Endothelial cell of umbilical vein (primary cell): ENCODE measurements at regions of chr6 and their contacts with region 1.

Region 1: DNA sequence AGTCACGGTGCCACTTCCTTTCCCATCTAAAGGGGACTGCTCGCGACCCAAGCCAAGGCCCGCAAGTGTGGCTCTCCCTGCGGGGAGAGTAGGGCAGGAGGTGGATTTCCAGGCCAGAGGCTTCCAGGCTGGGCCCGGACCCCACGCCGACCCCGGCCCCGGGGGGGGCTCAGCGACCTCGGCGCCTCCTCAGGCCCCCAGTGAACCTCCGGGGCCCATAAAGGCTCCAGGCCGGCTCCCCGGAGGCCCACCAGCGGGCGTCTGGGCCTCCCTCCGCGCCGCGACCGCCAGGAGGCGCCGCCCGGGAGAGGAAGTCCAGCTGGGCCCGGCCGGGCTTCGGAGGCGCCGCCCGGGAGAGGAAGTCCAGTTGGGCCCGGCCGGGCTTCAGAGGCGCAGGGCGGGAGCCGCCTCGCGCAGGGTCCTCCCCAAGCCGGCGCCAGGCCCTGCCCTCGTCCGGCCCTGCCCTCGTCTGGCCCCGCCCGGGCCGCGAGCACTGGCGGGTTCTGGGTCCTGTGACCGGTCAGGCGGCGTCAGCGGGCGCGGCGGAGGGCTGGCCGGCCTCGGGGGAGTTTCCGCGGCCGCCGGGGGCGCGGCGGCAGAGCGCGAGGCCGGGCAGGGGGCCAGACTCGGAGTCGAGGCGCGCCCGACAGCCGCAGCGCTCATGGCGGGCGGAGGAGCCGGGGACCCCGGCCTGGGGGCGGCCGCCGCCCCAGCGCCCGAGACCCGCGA is at the start of gene RAB32:
- DNase-seq: peak; percentile 92
- H3K4me3 ChIP-seq: peak within 1 kb of the TSS; percentile 78 to 95 (median 87)
- H3K27ac ChIP-seq: peak within 1 kb of the TSS; percentile 58
- H3K4me1 ChIP-seq: peaks cover 29% of the 10 kb centered on the region
- H3K27me3 ChIP-seq: no peaks in the 10 kb centered on the region
- CTCF ChIP-seq: peak; percentile 62 to 69
- POLR2A ChIP-seq: peak; percentile 69
- total RNA-seq, gene RAB32: 65.6 and 78.3 TPM in 2 replicates

Region 2: DNA sequence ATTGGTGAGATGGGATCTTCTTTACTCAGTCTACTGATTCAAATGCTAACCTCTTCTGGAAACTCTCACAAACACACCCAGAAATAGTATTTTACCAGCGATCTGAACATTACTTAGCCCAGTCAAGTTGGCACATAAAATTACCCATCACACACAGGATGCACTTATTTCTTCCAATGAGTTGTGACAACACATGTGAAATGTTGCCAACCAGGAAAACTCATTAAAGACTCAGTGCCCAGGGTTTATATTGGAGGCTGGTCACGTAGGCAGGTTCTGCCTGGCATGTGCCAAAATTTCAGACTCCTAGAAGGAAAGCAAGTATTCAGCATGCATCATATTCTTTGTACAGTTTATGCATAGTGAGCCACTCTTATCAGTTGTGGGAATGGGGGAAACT is 1251.3 kb before region 1 on chr6:
- CTCF ChIA-PET with region 1: no interaction called
- POLR2A ChIA-PET with region 1: no interaction called
- dilution Hi-C with region 1: no loop called
- intact Hi-C with region 1: no loop called
- DNase-seq: no peak
- H3K4me3 ChIP-seq: no peak overlapping the region
- H3K27ac ChIP-seq: no peak overlapping the region
- H3K4me1 ChIP-seq: no peaks in the 10 kb centered on the region
- H3K27me3 ChIP-seq: no peaks in the 10 kb centered on the region
- CTCF ChIP-seq: no peak
- POLR2A ChIP-seq: no peak

Region 3: DNA sequence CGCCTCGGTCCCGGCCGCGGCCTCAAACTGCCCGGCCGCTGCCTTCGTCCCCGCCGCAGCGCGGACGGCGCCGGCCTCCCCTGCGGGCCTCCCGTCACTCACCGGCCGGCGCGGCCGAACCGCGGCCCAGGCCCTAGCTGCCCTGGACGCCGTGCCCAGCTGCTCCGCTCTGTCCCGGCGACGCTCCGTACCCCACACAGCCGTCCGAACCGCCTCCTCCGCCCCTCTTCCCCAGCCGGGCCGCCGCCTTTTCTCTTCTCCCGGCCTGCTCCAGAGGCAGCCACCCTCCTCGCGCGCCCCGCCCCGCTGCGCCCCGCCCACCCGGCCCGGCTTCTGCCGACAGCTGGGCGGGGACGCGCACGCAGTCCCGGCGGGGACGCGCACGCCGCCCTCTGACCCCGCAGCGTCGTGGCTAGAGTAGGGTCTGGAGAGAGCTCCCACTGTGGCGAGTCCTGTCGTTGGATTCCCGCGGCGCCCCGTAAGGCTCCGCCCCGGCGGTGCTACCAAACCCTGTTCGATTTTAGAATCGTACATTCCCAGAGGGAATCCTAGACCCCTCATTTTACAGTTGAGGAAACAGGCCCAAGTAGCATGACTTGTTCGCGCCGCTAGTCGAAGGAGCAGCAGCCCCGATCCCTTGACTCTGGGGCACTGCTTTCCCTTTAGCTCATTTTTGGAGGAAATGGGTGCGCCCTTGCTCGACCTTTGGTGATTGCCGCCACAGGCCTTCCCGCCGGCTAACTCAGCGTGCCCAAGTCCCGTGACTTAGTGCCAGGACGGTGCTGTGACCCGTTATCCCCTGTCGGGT is 728.7 kb before region 1 on chr6 and contains the start of gene FBXO30:
- CTCF ChIA-PET with region 1: no interaction called
- POLR2A ChIA-PET with region 1: no interaction called
- dilution Hi-C with region 1: no loop called
- intact Hi-C with region 1: loop called (anchors 2 kb)
- DNase-seq: peak; percentile 95
- H3K4me3 ChIP-seq: peak within 1 kb of the TSS; percentile 56 to 95 (median 90)
- H3K27ac ChIP-seq: peak within 1 kb of the TSS; percentile 83
- H3K4me1 ChIP-seq: peaks cover 28% of the 10 kb centered on the region
- H3K27me3 ChIP-seq: no peaks in the 10 kb centered on the region
- CTCF ChIP-seq: no peak
- POLR2A ChIP-seq: peak; percentile 71
- total RNA-seq, gene FBXO30: 10.4 and 11.1 TPM in 2 replicates

Region 4: GRCh38 chr6:145963216-145964068 is 579.9 kb before region 1 on chr6:
- CTCF ChIA-PET with region 1: interaction called, 5 read pairs
- POLR2A ChIA-PET with region 1: no interaction called
- dilution Hi-C with region 1: no loop called
- intact Hi-C with region 1: loop called (anchors 1 kb)
- DNase-seq: peak; percentile 68
- H3K4me3 ChIP-seq: peak overlapping the region; percentile 73 to 78 (median 77)
- H3K27ac ChIP-seq: peak overlapping the region; percentile 66
- H3K4me1 ChIP-seq: peaks cover 11% of the 10 kb centered on the region
- H3K27me3 ChIP-seq: no peaks in the 10 kb centered on the region
- CTCF ChIP-seq: no peak
- POLR2A ChIP-seq: no peak

Region 5: DNA sequence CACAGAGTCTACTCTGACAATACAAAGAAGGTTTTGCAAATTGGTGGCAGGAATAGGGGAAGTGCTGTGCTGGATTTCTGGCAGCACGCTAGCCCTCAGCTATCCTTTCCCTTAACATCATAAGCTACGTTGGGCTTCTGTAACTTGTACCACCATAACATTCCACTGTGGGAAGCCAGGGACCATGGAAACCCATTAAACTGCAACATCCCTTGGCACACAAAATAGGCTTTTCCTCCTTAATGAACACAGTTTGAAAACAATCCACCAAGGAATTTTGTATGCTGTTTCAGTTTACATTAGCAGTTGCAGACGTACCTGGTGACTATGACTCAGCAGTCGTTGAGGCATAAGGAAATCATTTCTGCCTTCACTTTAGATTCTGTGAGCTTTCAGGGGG is 203.7 kb before region 1 on chr6:
- CTCF ChIA-PET with region 1: interaction called, 4 read pairs
- POLR2A ChIA-PET with region 1: no interaction called
- dilution Hi-C with region 1: no loop called
- intact Hi-C with region 1: loop called (anchors 5 kb)
- DNase-seq: peak; percentile 71
- H3K4me3 ChIP-seq: no peak overlapping the region
- H3K27ac ChIP-seq: no peak overlapping the region
- H3K4me1 ChIP-seq: peaks cover 28% of the 10 kb centered on the region
- H3K27me3 ChIP-seq: no peaks in the 10 kb centered on the region
- CTCF ChIP-seq: no peak
- POLR2A ChIP-seq: no peak

Region 6: DNA sequence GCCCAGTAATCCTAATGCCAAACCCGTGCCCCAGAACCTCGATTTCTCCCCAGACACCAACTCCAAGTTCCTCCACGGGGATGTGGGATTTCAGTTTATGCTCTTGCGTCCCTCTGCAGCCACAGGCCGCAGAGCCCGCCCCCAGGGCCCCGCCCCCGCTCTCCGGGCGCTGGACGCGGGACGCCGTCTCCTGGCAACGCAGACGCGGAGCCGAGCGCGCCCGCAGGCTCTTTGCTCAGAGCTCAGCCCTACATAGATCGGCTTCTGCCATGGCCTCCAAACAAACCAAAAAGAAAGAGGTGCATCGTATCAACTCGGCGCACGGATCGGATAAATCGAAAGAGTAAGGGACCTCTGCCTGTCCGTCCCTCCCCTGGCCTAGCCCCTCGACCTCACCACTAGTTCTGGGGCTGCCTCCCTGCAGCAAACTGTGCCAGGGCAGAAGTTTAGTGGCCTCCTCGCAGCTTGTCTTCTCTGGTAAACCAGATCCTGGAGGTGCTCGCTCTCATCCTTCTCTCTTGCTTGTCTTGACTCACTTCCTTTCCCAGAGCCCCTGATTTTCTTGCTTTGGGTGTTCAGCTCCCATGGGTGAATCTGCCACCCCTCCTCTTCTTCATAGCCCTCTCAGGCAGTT is 55.5 kb after region 1 on chr6 and contains the start of gene ADGB:
- CTCF ChIA-PET with region 1: no interaction called
- POLR2A ChIA-PET with region 1: no interaction called
- dilution Hi-C with region 1: no loop called
- intact Hi-C with region 1: loop called (anchors 2 kb)
- DNase-seq: peak; percentile 46
- H3K4me3 ChIP-seq: peak within 1 kb of the TSS in 2 of 3 experiments; percentile 21 to 27
- H3K27ac ChIP-seq: no peak within 1 kb of the TSS
- H3K4me1 ChIP-seq: no peaks in the 10 kb centered on the region
- H3K27me3 ChIP-seq: peaks cover 4 to 5% of the 10 kb centered on the region in 2 experiments
- CTCF ChIP-seq: no peak
- POLR2A ChIP-seq: no peak
- total RNA-seq, gene ADGB: not detected in 2 replicates

Region 7: GRCh38 chr6:146770965-146771735 is 227.8 kb after region 1 on chr6:
- CTCF ChIA-PET with region 1: no interaction called
- POLR2A ChIA-PET with region 1: no interaction called
- dilution Hi-C with region 1: no loop called
- intact Hi-C with region 1: loop called (anchors 1 kb)
- DNase-seq: peak; percentile 70
- H3K4me3 ChIP-seq: no peak overlapping the region
- H3K27ac ChIP-seq: peak overlapping the region; percentile 33
- H3K4me1 ChIP-seq: peaks cover 7% of the 10 kb centered on the region
- H3K27me3 ChIP-seq: no peaks in the 10 kb centered on the region
- CTCF ChIP-seq: no peak
- POLR2A ChIP-seq: peak; percentile 40

Region 8: GRCh38 chr6:147202516-147203312 is 659.3 kb after region 1 on chr6:
- CTCF ChIA-PET with region 1: no interaction called
- POLR2A ChIA-PET with region 1: no interaction called
- dilution Hi-C with region 1: no loop called
- intact Hi-C with region 1: loop called (anchors 2 kb)
- DNase-seq: peak; percentile 95
- H3K4me3 ChIP-seq: peak overlapping the region; percentile 58 to 92 (median 89)
- H3K27ac ChIP-seq: peak overlapping the region; percentile 86
- H3K4me1 ChIP-seq: peaks cover 20% of the 10 kb centered on the region
- H3K27me3 ChIP-seq: no peaks in the 10 kb centered on the region
- CTCF ChIP-seq: no peak
- POLR2A ChIP-seq: peak; percentile 61